H1 (cell line): ENCODE measurements at regions of chr12 and their contacts with region 1.

Region 1: DNA sequence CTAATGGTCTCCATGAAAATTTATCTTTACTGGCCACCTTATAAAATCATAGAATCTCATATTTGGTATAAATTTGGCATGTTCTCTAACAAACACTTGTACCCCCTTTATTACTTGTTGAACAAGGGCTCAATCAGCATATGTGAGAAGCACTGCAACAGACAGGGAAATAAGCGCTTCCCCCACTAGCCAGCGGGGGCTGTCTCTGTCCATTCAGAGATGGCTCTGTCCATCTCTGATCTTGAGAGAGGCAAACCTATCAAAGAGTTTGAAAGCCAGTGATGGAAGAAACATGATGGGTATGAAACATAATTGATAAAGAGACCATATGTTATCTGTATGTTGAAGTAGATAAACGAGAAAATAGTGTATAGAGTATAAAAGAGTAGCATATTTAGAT is 326.8 kb downstream of the PDZRN4 start:
- DNase-seq: no peak
- H3K4me3 ChIP-seq: no peak overlapping the region
- H3K27ac ChIP-seq: no peak overlapping the region
- H3K4me1 ChIP-seq: no peaks in the 10 kb centered on the region
- H3K27me3 ChIP-seq: no peaks in the 10 kb centered on the region; a peak in 1 of 7 replicates
- CTCF ChIP-seq: peak; percentile 31 to 43 (median 41)
- EP300 ChIP-seq: no peak
- POLR2A ChIP-seq: no peak
- RAD21 ChIP-seq: peak; percentile 55 to 62

Region 2: DNA sequence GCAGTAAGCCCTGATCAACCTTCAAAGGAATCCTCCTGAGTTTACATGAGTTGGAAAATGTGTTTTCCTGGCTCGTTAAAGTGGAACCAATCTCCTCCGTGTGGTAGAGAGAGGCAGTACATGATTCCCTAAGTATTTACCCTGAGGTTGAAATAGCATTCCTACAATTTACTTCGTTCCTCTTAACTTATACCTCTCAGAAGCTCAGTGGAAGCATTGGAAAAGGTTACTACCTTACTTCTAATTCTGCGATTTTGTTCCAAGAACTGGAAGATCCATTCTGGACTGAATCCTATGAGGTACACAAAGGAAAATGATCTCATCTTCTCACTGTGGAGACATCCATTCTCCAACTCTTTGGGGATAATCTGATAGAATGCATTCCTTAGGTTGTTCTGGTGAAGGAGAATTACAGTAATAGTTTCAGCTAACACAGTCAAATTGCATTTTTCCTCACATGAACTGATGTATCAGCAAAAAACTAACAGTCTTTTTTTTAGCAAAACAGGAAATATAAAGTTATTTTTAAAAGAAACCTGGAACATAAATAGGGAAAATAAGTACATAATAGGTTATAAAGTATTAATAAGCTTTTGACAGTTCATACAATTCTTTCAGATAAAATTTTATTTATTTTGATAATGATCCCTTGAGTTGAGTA is 148.8 kb after region 1 on chr12:
- CTCF ChIA-PET with region 1: interaction called, 14 read pairs
- POLR2A ChIA-PET with region 1: no interaction called
- DNase-seq: no peak
- H3K4me3 ChIP-seq: no peak overlapping the region
- H3K27ac ChIP-seq: no peak overlapping the region
- H3K4me1 ChIP-seq: no peaks in the 10 kb centered on the region
- H3K27me3 ChIP-seq: no peaks in the 10 kb centered on the region
- CTCF ChIP-seq: peak in 2 of 3 experiments; percentile 71 to 77; a peak in 3 of 4 replicates
- EP300 ChIP-seq: no peak
- POLR2A ChIP-seq: no peak
- RAD21 ChIP-seq: peak; percentile 91 to 92

Region 3: GRCh38 chr12:41684997-41685396 is 170.1 kb after region 1 on chr12:
- CTCF ChIA-PET with region 1: no interaction called
- POLR2A ChIA-PET with region 1: no interaction called
- DNase-seq: no peak
- H3K4me3 ChIP-seq: no peak overlapping the region
- H3K27ac ChIP-seq: no peak overlapping the region
- H3K4me1 ChIP-seq: no peaks in the 10 kb centered on the region
- H3K27me3 ChIP-seq: no peaks in the 10 kb centered on the region
- CTCF ChIP-seq: peak in 2 of 3 experiments; percentile 20 to 30; a peak in 2 of 4 replicates
- EP300 ChIP-seq: no peak
- POLR2A ChIP-seq: no peak
- RAD21 ChIP-seq: peak; percentile 35 to 48; a peak in 3 of 4 replicates